ENCODE measurements at regions of chr4 and their contacts with region 1.

Region 1: GRCh38 chr4:3193531-3194203 is 55.3 kb upstream of the MSANTD1 start:
- DNase-seq: no peak
- ATAC-seq: peak; percentile 24
- H3K4me3 Mint-ChIP-seq: no peak overlapping the region
- H3K27ac Mint-ChIP-seq: peak overlapping the region; percentile 51
- H3K4me1 Mint-ChIP-seq: peaks cover 62% of the 10 kb centered on the region
- H3K27me3 Mint-ChIP-seq: no peaks in the 10 kb centered on the region

Region 2: GRCh38 chr4:2995546-2996265 is 198.0 kb before region 1 on chr4:
- CTCF ChIA-PET with region 1: no interaction called
- POLR2A ChIA-PET with region 1: no interaction called
- DNase-seq: no peak
- ATAC-seq: no peak
- H3K4me3 Mint-ChIP-seq: no peak overlapping the region
- H3K27ac Mint-ChIP-seq: no peak overlapping the region
- H3K4me1 Mint-ChIP-seq: no peaks in the 10 kb centered on the region
- H3K27me3 Mint-ChIP-seq: peaks cover 20% of the 10 kb centered on the region

Region 3: GRCh38 chr4:3021627-3022026 is 172.0 kb before region 1 on chr4:
- CTCF ChIA-PET with region 1: no interaction called
- POLR2A ChIA-PET with region 1: no interaction called
- DNase-seq: no peak
- ATAC-seq: no peak
- H3K4me3 Mint-ChIP-seq: no peak overlapping the region
- H3K27ac Mint-ChIP-seq: no peak overlapping the region
- H3K4me1 Mint-ChIP-seq: no peaks in the 10 kb centered on the region
- H3K27me3 Mint-ChIP-seq: peaks cover 11% of the 10 kb centered on the region

Region 4: DNA sequence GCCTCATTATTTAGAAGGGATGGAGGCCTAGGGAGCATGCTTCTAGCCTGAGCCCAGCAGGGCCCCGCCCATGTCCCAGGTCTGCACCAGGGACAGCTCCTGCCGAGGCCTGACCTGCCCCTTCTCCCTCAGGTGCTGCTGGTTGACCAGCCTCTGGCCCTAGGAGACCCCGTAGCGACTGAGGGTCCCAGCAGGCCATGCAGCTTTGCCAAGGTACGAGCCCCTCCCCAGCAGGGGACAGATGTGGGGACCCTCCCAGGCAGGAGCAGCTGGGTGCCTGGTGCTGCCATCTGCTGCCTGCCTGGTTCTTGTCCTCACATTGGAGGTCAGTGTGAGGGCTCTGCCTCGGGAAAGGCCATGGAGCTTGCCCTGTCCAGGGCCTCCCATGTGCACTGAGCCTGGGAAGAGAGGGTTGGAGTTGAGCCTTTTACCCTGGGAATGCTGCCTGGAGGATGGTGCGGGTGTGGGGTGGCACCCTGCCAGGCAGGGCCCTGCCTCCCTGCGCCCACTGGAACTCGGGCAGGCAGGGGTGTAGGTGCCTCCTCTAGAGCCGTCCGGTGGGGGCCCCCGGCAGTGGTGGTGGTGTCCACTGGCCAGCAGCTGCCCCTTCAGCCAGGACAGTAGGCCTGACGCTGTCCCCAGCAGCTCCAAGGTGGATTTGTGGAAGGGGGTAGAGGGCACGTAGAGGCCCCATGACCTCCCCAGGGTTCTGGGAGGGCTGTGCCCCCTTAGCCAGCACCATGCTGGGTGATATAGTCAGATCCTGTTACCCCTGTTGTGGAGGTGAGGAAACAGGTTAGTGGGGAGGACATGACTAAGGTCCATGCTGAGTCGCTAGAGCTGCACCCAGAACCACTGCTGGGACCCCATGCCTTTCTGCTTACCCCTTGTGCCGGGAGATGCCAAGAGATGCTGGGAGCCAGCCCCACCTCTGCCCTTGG is 53.1 kb after region 1 on chr4:
- CTCF ChIA-PET with region 1: interaction called, 24 read pairs
- POLR2A ChIA-PET with region 1: no interaction called
- DNase-seq: no peak
- ATAC-seq: no peak
- H3K4me3 Mint-ChIP-seq: no peak overlapping the region
- H3K27ac Mint-ChIP-seq: no peak overlapping the region
- H3K4me1 Mint-ChIP-seq: peaks cover 20% of the 10 kb centered on the region
- H3K27me3 Mint-ChIP-seq: no peaks in the 10 kb centered on the region

Region 5: DNA sequence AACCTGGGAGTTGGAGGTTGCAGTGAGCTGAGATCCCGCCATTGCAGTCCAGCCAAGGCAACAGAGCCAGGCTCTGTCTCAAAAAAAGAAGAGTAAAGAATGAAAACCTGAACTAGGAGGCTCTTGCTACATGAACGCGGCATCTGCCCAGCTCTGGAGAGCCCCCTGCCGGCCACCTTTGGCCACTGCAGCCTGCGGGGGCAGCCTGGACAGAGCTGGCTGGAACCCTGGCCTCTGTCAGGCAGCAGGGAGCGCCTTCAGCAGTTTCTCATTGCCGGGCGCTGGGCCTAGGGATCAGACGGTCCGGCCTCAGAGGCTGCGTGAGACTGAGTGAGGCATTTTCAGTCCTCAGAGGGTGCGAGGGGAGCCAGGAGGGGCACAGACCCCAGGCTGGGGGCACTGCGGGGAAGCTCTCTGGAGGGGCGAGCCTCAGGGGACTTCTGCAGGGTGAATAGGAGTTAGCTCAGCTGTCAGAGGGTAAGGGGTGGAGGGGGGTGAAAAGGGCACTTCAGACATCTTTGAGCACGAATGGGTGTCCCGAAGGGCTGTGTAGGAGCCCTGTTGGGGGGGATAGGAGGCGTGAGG is 287.0 kb after region 1 on chr4:
- CTCF ChIA-PET with region 1: interaction called, 25 read pairs
- POLR2A ChIA-PET with region 1: no interaction called
- DNase-seq: peak; percentile 83
- ATAC-seq: peak; percentile 78
- H3K4me3 Mint-ChIP-seq: no peak overlapping the region
- H3K27ac Mint-ChIP-seq: no peak overlapping the region
- H3K4me1 Mint-ChIP-seq: peaks cover 7% of the 10 kb centered on the region
- H3K27me3 Mint-ChIP-seq: peaks cover 11% of the 10 kb centered on the region

Measured in activated CD8-positive, alpha-beta T cell treated with anti-CD3 and anti-CD28 coated beads, Interleukin-2, amount 10 ng/mL, durations not matched to agents 7 days and 5 days (primary cell).